GM12878 (cell line): ENCODE measurements at regions of chr16 and their contacts with region 1.

Region 1: GRCh38 chr16:21656795-21657768 is 4.7 kb upstream of the IGSF6 start:
- DNase-seq: peak; percentile 32
- ATAC-seq: peak; percentile 84
- H3K4me3 ChIP-seq: peak overlapping the region; percentile 9; the same call in 1 of the 2 replicates
- H3K27ac ChIP-seq: peak overlapping the region; percentile 38
- H3K4me1 ChIP-seq: peaks cover 29% of the 10 kb centered on the region
- H3K27me3 ChIP-seq: no peaks in the 10 kb centered on the region
- CTCF ChIP-seq: peak; percentile 67 to 81 (median 79)
- EP300 ChIP-seq: peak; percentile 61 to 74; a peak in 3 of 4 replicates
- POLR2A ChIP-seq: no peak
- RAD21 ChIP-seq: peak; percentile 83

Region 2: DNA sequence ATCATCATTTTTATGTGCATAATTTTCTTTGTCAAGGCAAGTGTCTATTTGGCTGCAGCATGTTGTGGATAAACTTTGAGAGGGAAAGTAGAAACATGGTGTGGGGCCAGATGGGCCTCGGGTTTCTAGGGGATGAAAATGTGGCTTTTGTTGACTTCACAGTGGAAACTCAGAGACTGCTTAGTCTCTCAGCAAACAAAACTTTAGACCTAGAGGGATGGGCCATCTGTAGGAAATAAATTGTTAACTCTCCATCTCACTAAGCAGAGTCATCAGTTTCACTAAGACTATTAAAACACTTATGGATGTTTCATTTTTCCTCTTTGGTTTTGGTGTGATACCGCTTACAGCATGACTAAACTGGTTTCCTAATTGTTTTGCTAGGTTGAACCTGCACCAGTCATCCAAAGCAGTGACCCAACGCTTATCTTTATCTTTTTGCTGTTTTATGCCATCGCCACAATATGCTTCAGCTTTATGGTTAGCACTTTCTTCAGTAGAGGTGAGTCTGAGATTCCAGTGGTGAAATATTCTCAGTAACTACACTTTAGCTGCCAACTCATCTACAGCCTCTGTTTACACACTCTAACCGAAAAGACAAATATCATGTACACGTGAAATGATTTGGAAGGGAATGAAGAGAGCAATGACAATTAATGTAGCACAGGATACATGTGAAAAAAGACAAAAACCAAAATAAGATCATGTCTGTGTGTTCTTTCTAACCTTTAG is 318.4 kb before region 1 on chr16:
- CTCF ChIA-PET with region 1: no interaction called
- POLR2A ChIA-PET with region 1: no interaction called
- RAD21 ChIA-PET with region 1: no interaction called
- SMC1A ChIA-PET with region 1: no interaction called
- in situ Hi-C with region 1: no loop called
- intact Hi-C with region 1: no loop called
- DNase-seq: no peak
- ATAC-seq: peak; percentile 21
- H3K4me3 ChIP-seq: no peak overlapping the region
- H3K27ac ChIP-seq: no peak overlapping the region
- H3K4me1 ChIP-seq: no peaks in the 10 kb centered on the region; the same call in 1 of the 2 replicates
- H3K27me3 ChIP-seq: no peaks in the 10 kb centered on the region
- CTCF ChIP-seq: no peak
- EP300 ChIP-seq: no peak
- POLR2A ChIP-seq: no peak
- RAD21 ChIP-seq: no peak

Region 3: DNA sequence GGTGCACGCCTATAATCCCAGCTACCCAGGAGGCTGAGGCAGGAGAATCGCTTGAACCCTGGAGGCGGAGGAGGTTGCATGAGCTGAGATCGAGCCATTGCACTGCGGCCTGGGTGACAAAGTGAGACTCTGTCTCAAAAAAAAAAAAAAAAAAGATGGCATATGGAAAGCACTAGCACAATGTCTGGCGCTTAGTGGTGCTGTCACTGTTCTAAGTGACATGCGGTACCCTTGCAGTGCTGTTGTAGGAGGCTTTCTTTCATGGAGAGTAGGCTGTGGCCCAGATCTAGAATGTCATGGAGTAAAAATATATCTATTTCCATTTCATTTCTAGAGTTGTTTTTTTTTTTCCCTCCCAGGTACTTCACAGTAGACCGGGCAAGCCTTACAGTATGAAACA is 72.3 kb before region 1 on chr16:
- CTCF ChIA-PET with region 1: interaction called, 24 read pairs
- POLR2A ChIA-PET with region 1: no interaction called
- RAD21 ChIA-PET with region 1: interaction called, 4 read pairs
- SMC1A ChIA-PET with region 1: interaction called, 7 read pairs
- in situ Hi-C with region 1: no loop called
- intact Hi-C with region 1: no loop called
- DNase-seq: no peak
- ATAC-seq: no peak
- H3K4me3 ChIP-seq: no peak overlapping the region
- H3K27ac ChIP-seq: no peak overlapping the region
- H3K4me1 ChIP-seq: no peaks in the 10 kb centered on the region
- H3K27me3 ChIP-seq: no peaks in the 10 kb centered on the region
- CTCF ChIP-seq: no peak
- EP300 ChIP-seq: no peak
- POLR2A ChIP-seq: no peak
- RAD21 ChIP-seq: no peak

Region 4: DNA sequence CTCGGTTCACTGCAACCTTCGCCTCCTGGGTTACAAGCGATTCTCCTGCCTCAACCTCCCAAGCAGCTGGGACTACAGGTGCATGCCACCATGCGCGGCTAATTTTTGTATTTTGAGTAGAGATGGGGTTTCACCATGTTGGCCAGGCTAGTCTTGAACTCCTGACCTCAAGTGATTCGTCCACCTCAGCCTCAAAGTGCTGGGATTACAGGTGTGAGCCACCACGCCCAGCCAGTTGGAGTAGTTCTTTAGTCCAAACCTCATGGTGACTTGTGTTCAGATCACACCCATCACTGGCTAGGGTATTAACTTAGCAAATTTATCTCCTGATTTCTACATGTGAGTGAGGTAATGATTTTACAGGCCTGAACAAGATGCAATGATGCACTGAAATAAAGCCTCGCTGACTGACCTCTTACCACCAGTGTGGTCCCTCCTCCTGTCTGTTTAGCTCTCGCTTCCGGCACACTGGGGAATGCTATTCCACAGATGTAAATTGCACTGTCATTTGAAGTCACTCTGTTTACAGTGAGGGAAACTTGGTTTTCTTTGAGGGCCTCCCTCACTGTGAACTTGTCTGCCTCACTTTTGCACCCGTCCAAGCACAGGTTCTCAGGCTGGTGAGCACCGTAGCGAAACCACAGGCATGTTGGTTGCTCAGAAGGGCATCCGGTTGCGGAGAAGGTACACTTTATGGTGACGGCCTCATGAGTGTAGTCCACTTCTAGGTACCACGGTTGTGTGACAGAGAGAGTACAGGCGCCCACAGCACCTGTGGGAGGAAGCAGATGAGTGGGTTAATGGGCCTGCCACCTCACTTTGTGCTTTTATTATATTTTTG is 10.1 kb before region 1 on chr16:
- CTCF ChIA-PET with region 1: interaction called, 100 read pairs
- POLR2A ChIA-PET with region 1: interaction called, 5 read pairs
- RAD21 ChIA-PET with region 1: interaction called, 36 read pairs
- SMC1A ChIA-PET with region 1: interaction called, 29 read pairs
- in situ Hi-C with region 1: no loop called
- intact Hi-C with region 1: no loop called
- DNase-seq: peak; percentile 99
- ATAC-seq: peak; percentile 91
- H3K4me3 ChIP-seq: no peak overlapping the region
- H3K27ac ChIP-seq: peak overlapping the region; percentile 88
- H3K4me1 ChIP-seq: peaks cover 33% of the 10 kb centered on the region
- H3K27me3 ChIP-seq: no peaks in the 10 kb centered on the region
- CTCF ChIP-seq: no peak
- EP300 ChIP-seq: peak; percentile 36 to 74; a peak in 3 of 4 replicates
- POLR2A ChIP-seq: no peak
- RAD21 ChIP-seq: no peak

Region 5: DNA sequence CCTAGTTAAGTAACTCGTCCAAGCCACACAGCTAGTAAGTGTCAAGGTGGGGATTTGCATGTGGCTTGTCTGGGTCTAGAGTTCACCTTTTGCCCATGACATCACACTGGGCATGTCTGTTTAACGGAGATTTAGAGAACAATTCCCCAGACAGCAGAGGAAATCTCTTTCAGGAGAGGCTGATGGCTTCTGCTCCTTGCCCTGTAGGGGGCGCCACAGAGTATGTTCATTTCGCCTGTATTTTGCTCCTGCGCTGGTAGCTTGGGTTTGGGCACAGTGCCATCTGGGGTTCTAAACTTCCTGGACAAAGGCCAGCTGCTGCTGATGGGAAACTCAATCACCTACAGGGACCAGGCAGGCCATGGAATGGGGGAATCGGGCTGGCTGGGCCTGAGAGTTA is 27.1 kb after region 1 on chr16:
- CTCF ChIA-PET with region 1: interaction called, 19 read pairs
- POLR2A ChIA-PET with region 1: no interaction called
- RAD21 ChIA-PET with region 1: interaction called, 7 read pairs
- SMC1A ChIA-PET with region 1: interaction called, 14 read pairs
- in situ Hi-C with region 1: no loop called
- intact Hi-C with region 1: loop called (anchors 2 kb)
- DNase-seq: no peak
- ATAC-seq: peak; percentile 87
- H3K4me3 ChIP-seq: no peak overlapping the region
- H3K27ac ChIP-seq: no peak overlapping the region
- H3K4me1 ChIP-seq: no peaks in the 10 kb centered on the region
- H3K27me3 ChIP-seq: no peaks in the 10 kb centered on the region
- CTCF ChIP-seq: peak; percentile 16 to 62 (median 54); a peak in 5 of 6 replicates
- EP300 ChIP-seq: no peak
- POLR2A ChIP-seq: no peak
- RAD21 ChIP-seq: no peak

Region 6: DNA sequence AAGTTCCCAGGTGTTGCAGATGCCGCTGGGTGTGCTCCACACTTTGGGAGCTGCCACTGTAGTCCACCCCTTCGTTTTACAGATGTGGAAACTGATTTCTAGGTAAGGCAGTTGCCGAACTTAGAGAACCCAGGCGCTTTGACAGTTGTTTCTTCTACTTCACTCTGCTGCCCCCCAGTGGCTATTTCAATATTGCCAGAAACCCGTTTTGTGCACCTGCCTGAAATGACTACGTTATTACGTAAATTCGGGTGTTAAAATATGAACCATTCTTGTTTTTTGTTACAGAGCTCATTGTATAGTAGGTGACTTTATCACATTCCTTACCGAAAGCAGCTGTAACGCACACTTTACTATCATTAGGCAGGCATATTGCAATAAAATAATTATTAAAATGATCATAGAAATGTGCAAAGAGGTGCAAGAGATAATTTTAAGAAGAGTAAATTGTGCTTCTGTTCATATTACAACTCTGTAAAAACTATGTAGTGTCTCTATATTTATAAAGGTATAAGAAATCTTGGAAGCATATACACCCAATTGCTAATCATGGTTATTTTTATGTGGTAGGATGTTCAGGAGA is 51.5 kb after region 1 on chr16:
- CTCF ChIA-PET with region 1: interaction called, 176 read pairs
- POLR2A ChIA-PET with region 1: interaction called, 5 read pairs
- RAD21 ChIA-PET with region 1: interaction called, 79 read pairs
- SMC1A ChIA-PET with region 1: interaction called, 142 read pairs
- in situ Hi-C with region 1: loop called (anchors 10 kb)
- intact Hi-C with region 1: loop called (anchors 1 kb)
- DNase-seq: peak; percentile 27
- ATAC-seq: peak; percentile 72
- H3K4me3 ChIP-seq: no peak overlapping the region
- H3K27ac ChIP-seq: no peak overlapping the region
- H3K4me1 ChIP-seq: peaks cover 6% of the 10 kb centered on the region
- H3K27me3 ChIP-seq: no peaks in the 10 kb centered on the region; a peak in 1 of 4 replicates
- CTCF ChIP-seq: peak; percentile 65 to 85 (median 85)
- EP300 ChIP-seq: no peak
- POLR2A ChIP-seq: no peak
- RAD21 ChIP-seq: peak; percentile 86